Psoas muscle (tissue), 8 donors: ENCODE measurements at regions of chr2 and their contacts with region 1.

Region 1: DNA sequence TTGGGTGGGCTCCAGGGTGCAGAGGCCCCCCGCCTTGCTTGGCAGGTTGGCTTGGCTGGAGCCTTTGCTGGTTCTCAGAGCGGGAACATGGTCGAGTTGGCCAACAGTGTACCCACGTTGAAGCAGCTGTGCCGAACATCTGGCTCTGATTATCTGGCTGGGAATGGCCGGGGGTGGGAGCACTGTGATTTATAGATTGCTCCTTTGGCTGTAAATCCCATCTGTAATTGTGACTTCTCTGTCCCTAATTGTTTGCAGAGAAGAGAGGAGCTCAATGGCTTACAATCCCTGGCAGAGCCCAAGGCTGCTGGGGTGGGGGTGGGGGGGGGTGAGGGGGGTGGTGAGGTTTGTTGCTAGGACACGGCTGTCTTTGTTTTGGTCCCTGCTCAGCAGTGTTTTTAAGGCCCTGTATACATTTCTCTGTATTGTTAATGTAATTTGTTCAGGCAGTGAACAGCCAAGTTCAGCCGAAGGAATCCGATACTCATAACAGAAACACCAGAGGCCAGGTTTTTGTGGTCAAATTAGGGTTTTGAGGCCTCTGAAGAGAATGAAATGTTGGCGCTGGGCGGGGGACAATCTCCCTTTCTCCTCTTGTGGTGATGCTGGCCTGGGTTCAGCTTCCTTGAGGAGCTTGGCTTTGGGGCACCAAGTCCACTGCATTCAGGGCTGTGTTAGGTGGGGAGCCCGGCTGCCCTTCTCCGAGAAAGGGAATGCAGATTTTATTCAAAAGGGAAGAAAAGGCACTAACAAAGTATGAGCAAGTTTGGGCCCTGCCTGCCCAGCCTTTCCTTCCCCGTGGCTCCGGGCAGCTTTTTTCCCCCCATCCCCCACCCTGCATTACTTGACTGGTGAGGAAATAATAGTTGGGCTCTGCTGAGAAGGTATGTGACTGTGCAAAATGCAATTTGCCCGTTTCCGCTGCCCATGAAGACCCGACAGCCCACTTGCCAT is 82.5 kb downstream of the TCF7L1 start:
- DNase-seq: peak; percentile 39 to 58
- ATAC-seq: no peak
- H3K4me3 ChIP-seq: no peak overlapping the region
- H3K27ac ChIP-seq: peak overlapping the region; percentile 86
- H3K4me1 ChIP-seq: peaks cover 25% of the 10 kb centered on the region
- H3K27me3 ChIP-seq: no peaks in the 10 kb centered on the region
- CTCF ChIP-seq: no peak

Region 2: DNA sequence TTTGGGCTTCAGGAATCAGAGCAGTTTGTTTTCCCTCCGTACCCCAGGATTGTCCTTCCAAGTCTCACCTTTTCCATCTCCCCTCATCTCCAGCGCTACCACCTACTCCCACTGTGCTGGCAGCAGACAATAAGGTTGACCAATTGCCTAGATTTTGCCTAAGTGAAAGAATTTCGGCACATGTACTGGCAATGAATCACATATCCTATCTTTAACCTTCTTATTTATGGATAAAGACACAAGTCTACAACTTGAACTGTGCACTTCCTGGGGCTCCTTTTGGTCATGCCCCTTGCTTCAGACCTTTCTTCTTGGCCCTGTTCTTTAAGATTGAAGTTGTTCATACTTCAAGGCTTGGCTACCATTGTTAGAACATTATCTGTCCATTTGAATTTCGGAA is 173.4 kb before region 1 on chr2:
- intact Hi-C with region 1: no loop called
- DNase-seq: no peak
- ATAC-seq: peak in 3 of 4 donors; percentile 45 to 57 (median 54)
- H3K4me3 ChIP-seq: no peak overlapping the region
- H3K27ac ChIP-seq: peak overlapping the region; percentile 12
- H3K4me1 ChIP-seq: peaks cover 16% of the 10 kb centered on the region
- H3K27me3 ChIP-seq: no peaks in the 10 kb centered on the region
- CTCF ChIP-seq: no peak

Region 3: GRCh38 chr2:85175369-85176299 is 40.1 kb before region 1 on chr2:
- intact Hi-C with region 1: loop called in 1 of 2 experiments (anchors 2 kb)
- DNase-seq: peak; percentile 66 to 68
- ATAC-seq: peak; percentile 85 to 91 (median 87)
- H3K4me3 ChIP-seq: peak overlapping the region; percentile 16
- H3K27ac ChIP-seq: peak overlapping the region; percentile 96
- H3K4me1 ChIP-seq: peaks cover 51% of the 10 kb centered on the region
- H3K27me3 ChIP-seq: no peaks in the 10 kb centered on the region
- CTCF ChIP-seq: no peak

Region 4: GRCh38 chr2:85188852-85189587 is 26.7 kb before region 1 on chr2:
- intact Hi-C with region 1: no loop called
- DNase-seq: no peak
- ATAC-seq: peak in 1 of 4 donors; percentile 29
- H3K4me3 ChIP-seq: no peak overlapping the region
- H3K27ac ChIP-seq: no peak overlapping the region
- H3K4me1 ChIP-seq: peaks cover 3% of the 10 kb centered on the region
- H3K27me3 ChIP-seq: no peaks in the 10 kb centered on the region
- CTCF ChIP-seq: no peak

Region 5: DNA sequence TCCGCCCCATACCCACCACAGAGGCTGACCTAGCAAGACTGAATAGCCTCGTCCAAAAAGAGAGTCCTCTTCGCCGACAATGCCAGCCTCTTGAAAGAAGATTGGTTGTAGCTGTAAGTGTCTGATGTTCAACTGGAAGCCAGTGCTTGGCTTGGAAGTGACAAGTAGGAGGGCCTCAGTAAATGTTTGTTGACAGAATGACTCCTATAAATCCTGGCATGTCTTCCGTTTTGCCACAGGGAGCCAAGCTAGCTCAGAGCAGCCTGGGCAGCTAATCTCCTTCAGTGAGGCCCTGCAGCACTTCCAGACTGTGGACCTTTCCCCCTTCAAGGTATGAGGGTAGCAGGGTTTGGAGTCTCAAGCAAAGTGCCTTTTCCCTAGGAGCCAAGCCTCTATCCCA is 153.8 kb after region 1 on chr2:
- intact Hi-C with region 1: no loop called
- DNase-seq: no peak
- ATAC-seq: no peak
- H3K4me3 ChIP-seq: no peak overlapping the region
- H3K27ac ChIP-seq: no peak overlapping the region
- H3K4me1 ChIP-seq: no peaks in the 10 kb centered on the region
- H3K27me3 ChIP-seq: no peaks in the 10 kb centered on the region
- CTCF ChIP-seq: no peak